Left cardiac atrium (tissue), 4 donors: ENCODE measurements at regions of chr1 and their contacts with region 1.

Region 1: GRCh38 chr1:91885716-91886506 is at the start of gene TGFBR3:
- DNase-seq: peak; percentile 93
- ATAC-seq: peak; percentile 95 to 97
- total RNA-seq, gene TGFBR3: 43.8 to 56.2 TPM

Region 2: DNA sequence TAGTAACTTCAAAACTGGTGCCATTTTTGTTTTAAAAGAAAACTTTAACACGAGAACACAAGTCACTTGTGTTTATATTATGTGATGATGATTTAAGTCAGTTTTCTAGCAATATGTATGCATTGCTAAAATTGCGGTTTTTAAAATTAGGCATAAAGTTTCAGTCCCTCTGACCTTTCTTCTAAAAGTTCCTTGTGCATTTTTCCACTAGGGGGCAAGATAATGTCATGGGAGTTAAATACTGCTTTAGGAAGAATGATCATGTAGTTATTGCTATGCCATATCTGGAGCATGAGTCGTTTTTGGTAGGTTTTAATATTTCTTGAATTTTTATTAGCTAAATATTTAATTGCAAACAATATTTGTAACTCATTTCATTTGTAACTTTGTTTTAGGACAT is 374.5 kb before region 1 on chr1:
- intact Hi-C with region 1: loop called in 1 of 2 experiments (anchors 5 kb)
- DNase-seq: no peak
- ATAC-seq: peak in 1 of 2 donors; percentile 36

Region 3: GRCh38 chr1:91697416-91697815 is 188.5 kb before region 1 on chr1:
- intact Hi-C with region 1: loop called in 1 of 2 experiments (anchors 10 kb)
- DNase-seq: no peak
- ATAC-seq: no peak

Region 4: GRCh38 chr1:91712981-91713841 is 172.7 kb before region 1 on chr1:
- intact Hi-C with region 1: loop called in 1 of 2 experiments (anchors 10 kb)
- DNase-seq: peak; percentile 68
- ATAC-seq: peak; percentile 82 to 86

Region 5: GRCh38 chr1:91830242-91831131 is 55.4 kb before region 1 on chr1:
- intact Hi-C with region 1: loop called in 1 of 2 experiments (anchors 10 kb)
- DNase-seq: peak; percentile 76
- ATAC-seq: peak; percentile 50 to 76